Astrocyte of the cerebellum (primary cell): ENCODE measurements at regions of chr13 and their contacts with region 1.

Region 1: GRCh38 chr13:76903544-76904162 is 17.4 kb upstream of the KCTD12 start:
- DNase-seq: peak; percentile 57
- H3K4me3 ChIP-seq: no peak overlapping the region
- CTCF ChIP-seq: peak; percentile 100

Region 2: GRCh38 chr13:75870397-75870903 is 1033.2 kb before region 1 on chr13:
- in situ Hi-C with region 1: loop called (anchors 25 kb)
- DNase-seq: no peak
- H3K4me3 ChIP-seq: no peak overlapping the region
- CTCF ChIP-seq: peak; percentile 66